Naive thymus-derived CD4-positive, alpha-beta T cell (primary cell): ENCODE measurements at regions of chr12 and their contacts with region 1.

Region 1: GRCh38 chr12:131608740-131609690 is 101.9 kb upstream of the SFSWAP start:
- DNase-seq: peak in 8 of 9 donors; percentile 31 to 64 (median 52)
- ATAC-seq: peak; percentile 80
- H3K4me3 ChIP-seq: no peak overlapping the region
- H3K4me3 Mint-ChIP-seq: peak overlapping the region in 3 of 10 donors; percentile 13 to 49 (median 29)
- H3K27ac ChIP-seq: no peak overlapping the region
- H3K27ac Mint-ChIP-seq: peak overlapping the region in 3 of 9 donors; percentile 38 to 79 (median 72)
- H3K4me1 ChIP-seq: peaks cover 38 to 49% of the 10 kb centered on the region in 2 donors
- H3K4me1 Mint-ChIP-seq: peaks cover 28 to 55% (median 47%) of the 10 kb centered on the region in 7 donors
- H3K27me3 ChIP-seq: no peaks in the 10 kb centered on the region
- H3K27me3 Mint-ChIP-seq: peaks cover 0 to 2% (median 0%) of the 10 kb centered on the region in 5 donors

Region 2: DNA sequence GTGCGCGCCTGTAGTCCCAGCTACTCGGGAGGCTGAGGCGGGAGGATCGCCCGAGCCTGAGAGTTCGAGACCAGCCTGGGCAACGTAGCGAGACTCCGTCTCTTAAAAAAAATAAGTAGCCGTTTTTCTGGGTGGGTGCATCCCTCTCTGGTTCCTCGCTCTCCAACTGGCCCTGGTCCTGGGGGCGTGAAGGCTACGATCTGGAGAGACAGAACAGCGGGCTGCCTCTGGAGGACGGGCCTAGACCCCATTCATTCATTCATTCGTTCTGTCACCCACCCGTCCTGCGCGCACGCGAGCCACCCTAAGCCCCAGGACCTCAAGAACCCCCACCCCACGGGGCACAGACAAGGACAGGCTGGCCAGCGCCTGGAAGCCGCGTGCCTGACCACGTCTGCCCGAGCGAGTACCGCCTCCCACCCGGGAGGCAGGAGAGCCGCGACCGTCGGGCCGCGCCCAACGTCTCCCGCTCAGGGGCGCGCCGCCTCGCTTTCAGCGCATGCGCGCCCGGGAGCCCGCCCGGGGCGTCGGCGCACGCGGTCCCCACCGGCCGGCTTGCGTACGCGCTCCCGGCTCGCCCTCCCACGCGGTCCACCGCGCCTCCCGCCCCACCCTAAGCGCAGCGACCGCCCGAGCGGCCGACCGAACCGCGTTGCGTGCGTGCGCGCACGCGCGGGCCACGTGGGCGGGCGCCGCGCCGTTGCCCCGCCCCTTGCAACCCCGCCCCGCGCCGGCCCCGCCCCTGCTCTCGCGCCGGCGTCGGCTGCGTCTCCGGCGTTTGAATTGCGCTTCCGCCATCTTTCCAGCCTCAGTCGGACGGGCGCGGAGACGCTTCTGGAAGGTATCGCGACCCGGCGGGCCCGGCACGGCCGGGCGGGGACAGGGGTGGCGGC is 737.5 kb before region 1 on chr12 and contains the start of gene RAN:
- CTCF ChIA-PET with region 1: no interaction called
- POLR2A ChIA-PET with region 1: no interaction called
- intact Hi-C with region 1: loop called in 1 of 2 experiments (anchors 10 kb)
- DNase-seq: peak; percentile 86 to 93 (median 90)
- ATAC-seq: peak; percentile 92
- H3K4me3 ChIP-seq: peak within 1 kb of the TSS; percentile 68
- H3K4me3 Mint-ChIP-seq: peak within 1 kb of the TSS; percentile 85 to 98 (median 91)
- H3K27ac ChIP-seq: peak within 1 kb of the TSS; percentile 90
- H3K27ac Mint-ChIP-seq: peak within 1 kb of the TSS; percentile 86 to 98 (median 95)
- H3K4me1 ChIP-seq: peaks cover 46 to 52% of the 10 kb centered on the region in 2 donors
- H3K4me1 Mint-ChIP-seq: peaks cover 29 to 83% (median 61%) of the 10 kb centered on the region in 7 donors
- H3K27me3 ChIP-seq: no peaks in the 10 kb centered on the region
- H3K27me3 Mint-ChIP-seq: no peaks in the 10 kb centered on the region
- total RNA-seq, gene RAN: 255 to 925 (median 269) TPM

Region 3: DNA sequence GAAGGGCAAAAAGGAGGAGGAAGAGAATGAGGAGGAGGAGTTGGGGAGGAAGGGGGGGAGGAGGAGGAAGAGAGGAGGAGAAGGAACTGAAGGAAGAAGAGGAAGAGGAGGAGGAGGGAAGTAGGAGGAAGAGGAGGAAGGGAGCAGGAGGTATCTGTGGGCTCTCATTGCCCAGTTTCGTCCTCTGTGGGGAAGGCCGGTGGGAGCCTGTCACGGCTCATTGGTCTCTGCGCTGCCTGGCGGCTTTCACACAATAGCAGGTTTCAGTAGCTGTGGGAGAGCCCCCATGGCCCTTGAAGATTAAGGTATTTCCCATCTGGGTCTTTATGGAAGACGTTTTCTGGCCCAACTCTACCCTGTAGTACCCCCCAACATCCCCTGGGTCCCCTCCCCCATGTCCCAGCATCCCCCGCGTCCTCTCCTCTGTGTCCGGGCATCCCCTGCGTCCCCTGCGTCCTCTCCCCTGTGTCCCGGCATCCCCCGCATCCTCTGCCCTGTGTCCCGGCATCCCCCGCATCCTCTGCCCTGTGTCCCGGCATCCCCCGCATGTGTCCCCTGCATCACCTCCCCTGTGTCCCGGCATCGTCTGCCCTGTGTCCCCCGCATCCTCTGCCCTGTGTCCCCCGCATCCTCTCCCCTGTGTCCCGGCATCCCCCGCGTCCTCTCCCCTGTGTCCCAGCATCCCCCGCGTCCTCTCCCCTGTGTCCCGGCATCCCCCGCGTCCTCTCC is 176.3 kb before region 1 on chr12:
- CTCF ChIA-PET with region 1: no interaction called
- POLR2A ChIA-PET with region 1: no interaction called
- intact Hi-C with region 1: no loop called
- DNase-seq: no peak
- ATAC-seq: no peak
- H3K4me3 ChIP-seq: no peak overlapping the region
- H3K4me3 Mint-ChIP-seq: no peak overlapping the region
- H3K27ac ChIP-seq: no peak overlapping the region
- H3K27ac Mint-ChIP-seq: no peak overlapping the region
- H3K4me1 ChIP-seq: no peaks in the 10 kb centered on the region
- H3K4me1 Mint-ChIP-seq: peaks cover 0 to 2% (median 0%) of the 10 kb centered on the region in 7 donors
- H3K27me3 ChIP-seq: no peaks in the 10 kb centered on the region
- H3K27me3 Mint-ChIP-seq: peaks cover 14 to 52% (median 28%) of the 10 kb centered on the region in 5 donors

Region 4: GRCh38 chr12:131511391-131511802 is 97.6 kb before region 1 on chr12:
- CTCF ChIA-PET with region 1: no interaction called
- POLR2A ChIA-PET with region 1: no interaction called
- intact Hi-C with region 1: loop called in 1 of 2 experiments (anchors 5 kb)
- DNase-seq: peak in 8 of 9 donors; percentile 34 to 74 (median 56)
- ATAC-seq: peak; percentile 92
- H3K4me3 ChIP-seq: no peak overlapping the region
- H3K4me3 Mint-ChIP-seq: peak overlapping the region; percentile 5 to 71 (median 26)
- H3K27ac ChIP-seq: peak overlapping the region; percentile 37
- H3K27ac Mint-ChIP-seq: peak overlapping the region; percentile 67 to 92 (median 82)
- H3K4me1 ChIP-seq: peaks cover 15 to 16% of the 10 kb centered on the region in 2 donors
- H3K4me1 Mint-ChIP-seq: peaks cover 6 to 21% (median 15%) of the 10 kb centered on the region in 7 donors
- H3K27me3 ChIP-seq: no peaks in the 10 kb centered on the region
- H3K27me3 Mint-ChIP-seq: peaks cover 0 to 5% (median 3%) of the 10 kb centered on the region in 5 donors

Region 5: DNA sequence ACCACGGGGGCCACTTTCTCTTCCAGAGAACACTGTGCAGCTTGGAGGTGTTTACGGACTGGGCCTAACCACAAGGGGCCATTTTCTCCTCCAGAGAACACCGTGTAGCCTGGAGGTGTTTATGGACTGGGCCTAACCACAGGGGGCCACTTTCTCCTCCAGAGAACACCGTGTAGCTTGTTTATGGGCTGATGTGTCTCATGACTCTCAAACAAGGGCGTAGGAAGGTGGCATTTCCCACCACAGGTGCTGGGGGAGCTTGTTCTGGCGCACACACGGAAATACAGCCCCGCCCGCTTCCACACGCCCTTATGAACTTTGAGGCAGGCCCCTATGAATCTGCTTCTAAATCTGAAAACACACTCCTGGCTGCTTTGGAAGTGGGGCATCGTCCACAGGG is 72.7 kb before region 1 on chr12:
- CTCF ChIA-PET with region 1: no interaction called
- POLR2A ChIA-PET with region 1: interaction called, 6 read pairs
- intact Hi-C with region 1: loop called in 1 of 2 experiments (anchors 10 kb)
- DNase-seq: peak in 7 of 9 donors; percentile 17 to 75 (median 58)
- ATAC-seq: peak; percentile 86
- H3K4me3 ChIP-seq: no peak overlapping the region
- H3K4me3 Mint-ChIP-seq: peak overlapping the region in 7 of 10 donors; percentile 7 to 62 (median 45)
- H3K27ac ChIP-seq: peak overlapping the region; percentile 54
- H3K27ac Mint-ChIP-seq: peak overlapping the region in 8 of 9 donors; percentile 74 to 93 (median 88)
- H3K4me1 ChIP-seq: peaks cover 6 to 26% of the 10 kb centered on the region in 2 donors
- H3K4me1 Mint-ChIP-seq: peaks cover 0 to 28% (median 13%) of the 10 kb centered on the region in 7 donors
- H3K27me3 ChIP-seq: no peaks in the 10 kb centered on the region
- H3K27me3 Mint-ChIP-seq: peaks cover 0 to 6% (median 0%) of the 10 kb centered on the region in 5 donors

Region 6: GRCh38 chr12:131592972-131593371 is 16.0 kb before region 1 on chr12:
- CTCF ChIA-PET with region 1: no interaction called
- POLR2A ChIA-PET with region 1: no interaction called
- intact Hi-C with region 1: no loop called
- DNase-seq: peak in 1 of 9 donors; percentile 30
- ATAC-seq: peak; percentile 60
- H3K4me3 ChIP-seq: no peak overlapping the region
- H3K4me3 Mint-ChIP-seq: peak overlapping the region in 1 of 10 donors; percentile 29
- H3K27ac ChIP-seq: no peak overlapping the region
- H3K27ac Mint-ChIP-seq: peak overlapping the region in 2 of 9 donors; percentile 10 to 50
- H3K4me1 ChIP-seq: peaks cover 0 to 5% of the 10 kb centered on the region in 2 donors
- H3K4me1 Mint-ChIP-seq: peaks cover 0 to 21% (median 7%) of the 10 kb centered on the region in 7 donors
- H3K27me3 ChIP-seq: no peaks in the 10 kb centered on the region
- H3K27me3 Mint-ChIP-seq: no peaks in the 10 kb centered on the region

Region 7: DNA sequence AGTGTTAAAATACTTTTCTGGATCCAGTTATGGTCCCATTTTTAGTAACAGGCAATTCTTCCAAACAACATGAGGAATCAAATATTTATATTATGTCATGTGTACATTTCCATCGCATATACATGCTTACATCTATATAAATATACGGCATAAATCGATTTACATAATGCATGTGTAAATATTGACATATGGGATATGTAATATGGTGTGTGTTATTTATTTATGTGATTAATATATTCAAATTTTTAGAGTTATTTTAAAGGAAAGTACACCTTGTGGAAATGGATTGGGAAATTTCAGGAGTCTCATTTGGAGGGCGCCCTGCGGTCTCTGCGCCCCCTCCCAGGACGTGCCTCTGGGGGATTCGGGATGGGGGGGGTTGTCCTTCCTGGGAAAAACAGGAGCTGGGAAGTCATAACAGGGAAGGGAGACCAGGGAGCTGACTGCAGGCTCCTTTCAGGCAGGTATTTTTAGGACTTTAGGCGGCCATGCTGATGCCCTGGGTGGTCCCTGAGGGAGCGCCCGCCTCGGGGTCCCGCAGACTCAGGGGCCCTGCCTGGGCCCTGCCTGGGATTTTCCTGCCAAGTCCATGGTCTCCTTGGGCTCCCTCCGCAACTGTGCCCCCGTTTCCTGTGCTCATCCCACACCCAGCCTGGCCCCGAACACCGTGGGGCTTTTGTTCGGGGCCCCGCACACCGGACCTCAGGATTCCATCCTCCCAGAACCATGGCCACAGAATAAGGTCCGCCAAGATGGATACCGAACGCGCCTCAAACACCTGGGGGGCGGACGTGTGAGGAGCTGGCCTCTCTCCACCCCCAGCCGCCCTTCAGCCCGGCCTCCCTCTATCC is 19.2 kb after region 1 on chr12:
- CTCF ChIA-PET with region 1: no interaction called
- POLR2A ChIA-PET with region 1: no interaction called
- intact Hi-C with region 1: no loop called
- DNase-seq: no peak
- ATAC-seq: no peak
- H3K4me3 ChIP-seq: no peak overlapping the region
- H3K4me3 Mint-ChIP-seq: peak overlapping the region in 4 of 10 donors; percentile 27 to 65 (median 57)
- H3K27ac ChIP-seq: no peak overlapping the region
- H3K27ac Mint-ChIP-seq: peak overlapping the region; percentile 44 to 96 (median 86)
- H3K4me1 ChIP-seq: peaks cover 0 to 7% of the 10 kb centered on the region in 2 donors
- H3K4me1 Mint-ChIP-seq: peaks cover 7 to 17% (median 13%) of the 10 kb centered on the region in 7 donors
- H3K27me3 ChIP-seq: no peaks in the 10 kb centered on the region
- H3K27me3 Mint-ChIP-seq: peaks cover 0 to 7% (median 4%) of the 10 kb centered on the region in 5 donors

Region 8: DNA sequence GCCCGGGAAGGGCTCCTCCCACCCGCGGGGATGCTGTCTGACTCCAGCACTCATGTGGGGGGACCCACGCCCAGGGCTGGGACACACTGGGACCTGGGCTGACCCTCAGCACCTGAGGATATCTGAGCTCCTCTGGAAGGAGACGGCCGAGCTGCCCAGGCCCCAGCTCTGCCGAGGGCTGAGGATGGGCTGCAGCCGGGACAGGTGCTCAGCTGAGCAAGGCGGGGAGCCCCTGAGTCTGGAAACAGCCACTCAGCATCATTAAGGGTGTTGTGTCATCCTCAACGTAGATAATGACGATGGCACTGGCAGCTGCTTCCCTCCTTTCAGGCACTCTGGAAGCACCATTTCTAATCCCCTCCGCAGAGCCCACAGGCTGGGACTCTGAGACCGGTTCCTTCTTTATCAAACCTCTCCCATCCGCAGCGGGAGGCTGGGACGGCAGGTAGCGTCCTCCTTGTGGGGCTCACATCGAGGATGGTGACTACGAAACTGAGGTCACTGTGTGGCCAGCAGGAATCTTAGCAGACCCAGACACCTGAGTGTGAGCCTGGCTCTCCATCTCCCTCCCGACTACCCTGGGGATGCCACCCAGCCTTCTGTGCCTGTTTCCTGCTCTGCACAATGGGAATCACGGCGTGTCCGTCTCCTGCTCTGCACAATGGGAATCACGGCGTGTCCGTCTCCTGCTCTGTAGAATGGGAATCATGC is 75.2 kb after region 1 on chr12:
- CTCF ChIA-PET with region 1: no interaction called
- POLR2A ChIA-PET with region 1: no interaction called
- intact Hi-C with region 1: loop called in 1 of 2 experiments (anchors 5 kb)
- DNase-seq: no peak
- ATAC-seq: no peak
- H3K4me3 ChIP-seq: no peak overlapping the region
- H3K4me3 Mint-ChIP-seq: no peak overlapping the region
- H3K27ac ChIP-seq: no peak overlapping the region
- H3K27ac Mint-ChIP-seq: no peak overlapping the region
- H3K4me1 ChIP-seq: no peaks in the 10 kb centered on the region
- H3K4me1 Mint-ChIP-seq: peaks cover 0 to 17% (median 11%) of the 10 kb centered on the region in 7 donors
- H3K27me3 ChIP-seq: no peaks in the 10 kb centered on the region
- H3K27me3 Mint-ChIP-seq: peaks cover 0 to 6% (median 2%) of the 10 kb centered on the region in 5 donors

Region 9: DNA sequence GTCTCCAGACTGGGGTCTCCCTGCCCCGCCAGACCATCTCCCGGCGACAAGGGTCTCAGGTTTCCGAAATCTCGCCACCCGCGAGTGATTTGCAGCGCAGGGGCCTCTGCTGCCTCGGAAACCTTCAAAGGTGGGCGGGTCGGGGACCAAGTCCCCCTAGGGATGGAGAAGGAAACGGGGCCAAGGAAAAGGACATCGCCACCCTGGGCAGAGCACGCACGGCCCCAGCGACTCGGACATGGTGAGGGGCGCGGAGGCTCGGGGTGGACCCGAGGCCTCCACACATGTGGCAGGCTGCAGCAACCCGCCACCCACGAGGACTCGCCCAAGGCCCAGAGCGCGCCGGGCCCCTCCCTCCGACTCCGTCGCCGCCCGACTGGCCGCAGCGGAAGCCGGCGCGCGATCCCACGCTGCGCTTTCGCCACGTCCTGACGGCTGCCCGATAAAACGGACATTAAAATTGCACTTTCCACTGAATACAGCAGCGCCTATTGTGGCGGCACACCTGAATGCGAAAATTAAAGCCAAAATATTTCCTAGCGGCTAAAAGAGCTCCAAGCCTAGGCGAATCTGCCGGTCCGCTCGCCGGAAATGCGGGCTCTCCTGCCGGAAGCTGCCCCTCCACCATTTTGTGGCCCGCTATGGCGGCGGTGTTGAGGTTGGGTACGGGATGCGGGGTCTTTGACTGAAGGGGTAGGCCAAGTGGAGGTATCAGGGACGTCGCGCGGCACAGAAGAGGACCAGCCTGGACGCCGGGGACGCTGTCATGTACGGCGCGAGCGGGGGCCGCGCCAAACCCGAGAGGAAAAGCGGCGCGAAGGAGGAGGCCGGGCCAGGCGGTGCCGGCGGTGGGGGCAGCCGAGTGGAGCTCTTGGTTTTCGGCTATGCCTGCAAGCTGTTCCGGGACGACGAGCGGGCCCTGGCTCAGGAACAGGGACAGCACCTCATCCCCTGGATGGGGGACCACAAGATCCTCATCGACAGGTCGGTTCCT is 101.7 kb after region 1 on chr12 and contains the start of gene SFSWAP:
- CTCF ChIA-PET with region 1: no interaction called
- POLR2A ChIA-PET with region 1: interaction called, 5 read pairs
- intact Hi-C with region 1: loop called (anchors 2 kb)
- DNase-seq: peak; percentile 63 to 81 (median 79)
- ATAC-seq: peak; percentile 92
- H3K4me3 ChIP-seq: peak within 1 kb of the TSS; percentile 84
- H3K4me3 Mint-ChIP-seq: peak within 1 kb of the TSS; percentile 93 to 99 (median 96)
- H3K27ac ChIP-seq: peak within 1 kb of the TSS; percentile 87
- H3K27ac Mint-ChIP-seq: peak within 1 kb of the TSS; percentile 90 to 99 (median 97)
- H3K4me1 ChIP-seq: peaks cover 18 to 19% of the 10 kb centered on the region in 2 donors
- H3K4me1 Mint-ChIP-seq: peaks cover 15 to 40% (median 28%) of the 10 kb centered on the region in 7 donors
- H3K27me3 ChIP-seq: no peaks in the 10 kb centered on the region
- H3K27me3 Mint-ChIP-seq: no peaks in the 10 kb centered on the region
- total RNA-seq, gene SFSWAP: 65.6 to 120 (median 98.4) TPM

Region 10: GRCh38 chr12:131830335-131830913 is 221.4 kb after region 1 on chr12:
- CTCF ChIA-PET with region 1: no interaction called
- POLR2A ChIA-PET with region 1: no interaction called
- intact Hi-C with region 1: loop called in 1 of 2 experiments (anchors 10 kb)
- DNase-seq: peak in 4 of 9 donors; percentile 15 to 49 (median 36)
- ATAC-seq: peak; percentile 69
- H3K4me3 ChIP-seq: peak overlapping the region; percentile 13
- H3K4me3 Mint-ChIP-seq: peak overlapping the region; percentile 61 to 78 (median 72)
- H3K27ac ChIP-seq: no peak overlapping the region
- H3K27ac Mint-ChIP-seq: no peak overlapping the region
- H3K4me1 ChIP-seq: peaks cover 0 to 19% of the 10 kb centered on the region in 2 donors
- H3K4me1 Mint-ChIP-seq: peaks cover 4 to 14% (median 10%) of the 10 kb centered on the region in 7 donors
- H3K27me3 ChIP-seq: peaks cover 0 to 6% of the 10 kb centered on the region in 2 donors
- H3K27me3 Mint-ChIP-seq: peaks cover 30 to 52% (median 35%) of the 10 kb centered on the region in 5 donors